Astrocyte of the spinal cord (primary cell): ENCODE measurements at regions of chr22 and their contacts with region 1.

Region 1: DNA sequence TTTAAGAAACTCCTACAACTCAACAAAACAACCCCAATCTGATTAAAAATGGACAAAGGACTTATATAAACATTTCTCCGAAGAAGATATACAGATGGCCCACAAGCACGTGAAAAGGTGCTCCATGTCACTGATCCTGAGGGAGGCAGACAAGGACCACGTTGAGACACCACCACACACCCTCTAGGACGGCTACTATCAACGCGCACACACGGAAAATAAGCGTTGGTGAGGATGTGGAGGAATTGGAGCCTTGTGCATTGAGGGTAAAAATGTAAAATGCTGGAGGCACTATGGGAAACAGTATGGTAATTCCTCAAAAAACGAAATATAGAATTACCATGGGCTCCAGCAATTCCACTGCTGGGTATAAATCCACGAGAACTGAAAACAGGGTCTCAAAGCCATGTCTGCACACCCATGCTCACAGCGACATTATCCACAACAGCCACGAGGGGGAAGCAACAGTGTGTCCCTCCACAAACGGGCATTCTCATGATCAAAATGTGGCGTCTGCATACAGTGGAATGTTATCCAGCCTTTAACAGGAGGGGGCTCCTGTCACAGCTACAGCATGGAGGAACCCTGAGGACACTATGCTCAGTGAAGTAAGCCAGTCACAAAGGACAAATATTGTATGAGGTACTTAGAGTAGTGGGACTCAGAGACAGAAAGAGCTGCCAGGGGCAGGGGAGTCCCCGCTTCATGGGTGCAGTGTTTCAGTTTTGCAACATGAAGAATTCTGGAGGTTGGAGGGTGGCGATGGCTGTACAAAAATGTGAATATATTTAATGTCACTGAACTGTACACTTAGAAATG is 22.5 kb downstream of the YPEL1 start:
- DNase-seq: peak; percentile 80
- H3K4me3 ChIP-seq: peak overlapping the region; percentile 6
- CTCF ChIP-seq: peak; percentile 82

Region 2: GRCh38 chr22:21849489-21849888 is 136.4 kb after region 1 on chr22:
- in situ Hi-C with region 1: no loop called
- DNase-seq: no peak
- H3K4me3 ChIP-seq: no peak overlapping the region
- CTCF ChIP-seq: no peak

Region 3: GRCh38 chr22:21938071-21938822 is 225.1 kb after region 1 on chr22:
- in situ Hi-C with region 1: loop called (anchors 25 kb)
- DNase-seq: peak; percentile 91
- H3K4me3 ChIP-seq: peak overlapping the region; percentile 40
- CTCF ChIP-seq: peak; percentile 98